ENCODE measurements at regions of chr9 and their contacts with region 1.

Region 1: DNA sequence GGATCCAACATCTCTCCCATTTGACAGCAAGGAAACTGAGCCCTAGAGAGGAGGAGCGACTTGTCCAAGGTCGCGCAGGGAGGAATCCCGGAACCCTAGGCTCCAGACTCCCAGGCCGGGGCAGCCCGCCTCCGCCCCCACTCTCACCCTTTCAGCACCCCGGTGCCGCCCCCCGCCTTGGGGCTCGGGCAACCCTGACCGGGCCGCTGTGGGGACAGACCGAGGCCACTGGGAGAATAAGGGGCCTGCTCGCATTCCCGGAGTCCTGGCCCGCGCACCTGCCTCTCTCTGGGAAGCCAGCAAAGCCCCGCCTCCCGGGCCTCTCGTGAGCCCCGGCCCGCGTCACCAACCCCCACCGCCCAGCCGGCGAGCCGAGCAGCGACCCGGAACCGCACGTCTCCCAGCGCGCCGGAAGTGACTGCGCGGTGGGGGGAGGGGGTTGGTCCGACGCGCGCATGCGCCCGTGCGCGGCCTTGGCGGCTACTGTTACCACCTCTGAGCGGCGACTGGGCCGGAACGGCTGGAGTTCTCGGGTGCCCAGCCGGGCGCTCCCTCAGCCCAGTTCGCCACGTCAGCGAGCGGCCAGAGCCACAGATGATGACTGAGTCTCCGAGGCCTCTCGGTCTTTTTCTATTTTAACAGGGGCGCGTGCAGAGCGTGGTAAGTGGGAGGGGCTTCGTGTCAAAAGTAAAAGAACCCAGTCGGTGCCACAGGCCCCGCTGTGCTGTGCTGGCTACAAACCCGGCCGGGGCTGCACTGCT is at the start of gene GOLGA1:
- DNase-seq: peak; percentile 93 to 95 (median 94)
- H3K4me3 ChIP-seq: peak within 1 kb of the TSS; percentile 94 to 99
- H3K4me3 Mint-ChIP-seq: peak within 1 kb of the TSS; percentile 91 to 97 (median 96)
- H3K27ac ChIP-seq: peak within 1 kb of the TSS; percentile 96
- H3K27ac Mint-ChIP-seq: peak within 1 kb of the TSS; percentile 86 to 99 (median 97)
- H3K4me1 ChIP-seq: peaks cover 18% of the 10 kb centered on the region
- H3K4me1 Mint-ChIP-seq: peaks cover 13 to 35% (median 27%) of the 10 kb centered on the region in 4 donors
- H3K27me3 ChIP-seq: no peaks in the 10 kb centered on the region
- H3K27me3 Mint-ChIP-seq: no peaks in the 10 kb centered on the region
- total RNA-seq, gene GOLGA1: 27.3 to 38.3 TPM

Region 2: DNA sequence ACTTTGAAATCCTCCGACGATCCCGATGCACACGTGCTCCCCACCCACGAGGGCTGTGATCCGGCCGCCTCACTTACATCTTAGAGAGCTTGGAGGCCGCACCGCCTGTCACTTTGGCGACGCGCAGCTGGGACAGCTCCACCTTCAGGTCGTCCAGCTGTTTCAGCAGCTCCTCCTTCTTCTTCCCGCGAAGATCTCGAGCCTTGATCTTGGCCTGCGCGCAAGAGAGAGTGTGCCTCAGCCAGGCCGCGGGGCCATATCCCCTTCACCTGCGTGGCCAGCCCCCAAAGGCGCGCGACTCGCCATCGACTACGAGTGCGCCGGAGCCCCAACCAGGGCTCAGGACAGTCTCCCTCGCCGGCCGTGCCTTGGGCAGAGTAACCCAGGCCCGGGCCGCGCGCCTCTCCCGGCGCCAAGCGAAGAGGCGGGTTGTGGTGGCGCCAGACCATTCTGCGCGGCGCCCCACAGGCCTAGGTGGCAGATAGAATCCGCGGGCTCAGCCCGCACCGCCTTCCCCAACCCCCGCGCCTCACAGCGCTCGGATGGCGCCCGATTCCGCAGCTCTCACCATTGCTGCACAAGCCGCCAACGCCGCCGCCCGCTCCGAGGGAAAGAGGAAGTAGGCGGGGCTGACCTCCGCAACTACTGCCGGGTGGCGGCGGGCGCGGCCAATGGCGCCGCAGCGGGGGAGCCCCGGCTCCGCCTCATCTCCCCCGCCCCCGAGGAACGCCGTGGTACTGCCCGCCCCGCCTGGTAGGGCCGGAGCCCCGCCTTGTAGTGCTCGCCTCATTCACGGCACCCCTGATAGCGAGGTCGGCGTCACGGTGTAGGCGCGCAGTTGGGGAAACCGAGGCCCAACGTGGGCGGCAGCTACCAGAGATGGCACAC is 79.3 kb before region 1 on chr9 and contains the starts of genes ARPC5L and RPL35:
- CTCF ChIA-PET with region 1: no interaction called
- POLR2A ChIA-PET with region 1: interaction called, 17 read pairs
- intact Hi-C with region 1: loop called (anchors 1 kb)
- DNase-seq: peak; percentile 95 to 96 (median 95)
- H3K4me3 ChIP-seq: peak within 1 kb of the TSS; percentile 78 to 84
- H3K4me3 Mint-ChIP-seq: peak within 1 kb of the TSS; percentile 91 to 100 (median 96)
- H3K27ac ChIP-seq: peak within 1 kb of the TSS; percentile 95
- H3K27ac Mint-ChIP-seq: peak within 1 kb of the TSS; percentile 92 to 99 (median 98)
- H3K4me1 ChIP-seq: peaks cover 26% of the 10 kb centered on the region
- H3K4me1 Mint-ChIP-seq: peaks cover 20 to 41% (median 29%) of the 10 kb centered on the region in 4 donors
- H3K27me3 ChIP-seq: no peaks in the 10 kb centered on the region
- H3K27me3 Mint-ChIP-seq: no peaks in the 10 kb centered on the region
- total RNA-seq, gene ARPC5L: 26.8 to 31.4 TPM
- total RNA-seq, gene RPL35: 1,702 to 1,766 TPM

Region 3: GRCh38 chr9:124929464-124929863 is 11.4 kb before region 1 on chr9:
- CTCF ChIA-PET with region 1: no interaction called
- POLR2A ChIA-PET with region 1: interaction called, 36 read pairs
- intact Hi-C with region 1: no loop called
- DNase-seq: peak in 3 of 5 donors; percentile 14 to 15 (median 15)
- H3K4me3 ChIP-seq: no peak overlapping the region
- H3K4me3 Mint-ChIP-seq: peak overlapping the region in 5 of 8 donors; percentile 14 to 51 (median 27)
- H3K27ac ChIP-seq: no peak overlapping the region
- H3K27ac Mint-ChIP-seq: peak overlapping the region in 6 of 7 donors; percentile 9 to 69 (median 48)
- H3K4me1 ChIP-seq: peaks cover 17% of the 10 kb centered on the region
- H3K4me1 Mint-ChIP-seq: peaks cover 12 to 42% (median 16%) of the 10 kb centered on the region in 4 donors
- H3K27me3 ChIP-seq: no peaks in the 10 kb centered on the region
- H3K27me3 Mint-ChIP-seq: no peaks in the 10 kb centered on the region

Region 4: GRCh38 chr9:125126019-125126746 is 185.3 kb after region 1 on chr9:
- CTCF ChIA-PET with region 1: no interaction called
- POLR2A ChIA-PET with region 1: interaction called, 12 read pairs
- intact Hi-C with region 1: no loop called
- DNase-seq: peak; percentile 84 to 90 (median 86)
- H3K4me3 ChIP-seq: no peak overlapping the region
- H3K4me3 Mint-ChIP-seq: peak overlapping the region; percentile 63 to 95 (median 81)
- H3K27ac ChIP-seq: no peak overlapping the region
- H3K27ac Mint-ChIP-seq: peak overlapping the region; percentile 88 to 99 (median 94)
- H3K4me1 ChIP-seq: peaks cover 24% of the 10 kb centered on the region
- H3K4me1 Mint-ChIP-seq: peaks cover 24 to 36% (median 30%) of the 10 kb centered on the region in 4 donors
- H3K27me3 ChIP-seq: no peaks in the 10 kb centered on the region
- H3K27me3 Mint-ChIP-seq: peaks cover 0 to 1% of the 10 kb centered on the region in 2 donors

Region 5: DNA sequence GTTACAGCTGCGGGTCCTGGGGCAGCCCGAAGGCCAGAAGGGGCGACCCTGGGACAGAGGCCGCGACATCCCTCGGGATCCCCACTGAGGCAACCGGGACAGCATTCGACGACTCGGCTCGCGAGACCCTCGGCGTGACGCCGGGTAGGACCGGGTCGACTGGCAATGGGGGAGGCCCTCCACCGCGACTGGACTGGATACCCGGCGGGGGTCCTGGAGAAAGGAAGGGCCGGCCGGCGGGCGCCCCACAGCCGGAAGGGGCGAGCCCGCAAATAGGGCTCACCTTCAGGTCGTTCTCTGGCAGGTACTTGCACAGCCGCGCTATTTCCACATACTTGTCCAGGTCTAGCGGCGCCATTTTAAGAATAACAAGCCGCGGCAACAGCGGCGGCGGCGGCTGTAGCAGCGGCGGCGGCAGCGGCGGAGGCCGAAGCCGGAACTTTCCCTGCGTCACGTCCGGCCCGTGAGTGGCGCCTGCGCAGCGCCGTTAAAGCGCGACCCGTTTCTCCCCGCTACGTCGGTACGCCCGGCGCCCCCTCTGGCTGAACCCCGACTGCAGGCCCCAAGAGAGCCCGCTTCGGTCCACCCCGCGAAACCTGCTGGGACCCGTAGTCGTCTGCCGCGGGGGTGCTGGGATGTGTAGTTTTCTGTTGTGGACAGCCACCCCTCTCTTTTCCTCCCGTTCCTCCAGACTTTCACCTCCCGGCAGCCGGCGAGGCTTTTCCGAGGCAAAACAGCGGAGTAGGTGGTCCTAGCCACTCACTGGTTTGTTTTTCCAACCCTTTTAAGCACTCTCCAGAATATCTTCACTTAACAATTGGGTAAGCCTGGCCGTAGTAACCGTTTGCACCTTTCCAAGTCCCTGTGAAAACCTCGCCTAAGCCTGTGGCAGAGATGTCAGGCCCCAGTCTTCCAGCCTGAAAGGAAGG is 248.8 kb after region 1 on chr9 and contains the start of gene PPP6C:
- CTCF ChIA-PET with region 1: no interaction called
- POLR2A ChIA-PET with region 1: no interaction called
- intact Hi-C with region 1: loop called (anchors 1 kb)
- DNase-seq: peak; percentile 95 to 98 (median 96)
- H3K4me3 ChIP-seq: peak within 1 kb of the TSS; percentile 84 to 100
- H3K4me3 Mint-ChIP-seq: peak within 1 kb of the TSS; percentile 89 to 98 (median 94)
- H3K27ac ChIP-seq: peak within 1 kb of the TSS; percentile 97
- H3K27ac Mint-ChIP-seq: peak within 1 kb of the TSS; percentile 89 to 97 (median 94)
- H3K4me1 ChIP-seq: peaks cover 81% of the 10 kb centered on the region
- H3K4me1 Mint-ChIP-seq: peaks cover 20 to 75% (median 48%) of the 10 kb centered on the region in 4 donors
- H3K27me3 ChIP-seq: no peaks in the 10 kb centered on the region
- H3K27me3 Mint-ChIP-seq: no peaks in the 10 kb centered on the region
- total RNA-seq, gene PPP6C: 49.2 TPM